Motor neuron (in vitro differentiated cells): ENCODE measurements at regions of chr9 and their contacts with region 1.

Region 1: DNA sequence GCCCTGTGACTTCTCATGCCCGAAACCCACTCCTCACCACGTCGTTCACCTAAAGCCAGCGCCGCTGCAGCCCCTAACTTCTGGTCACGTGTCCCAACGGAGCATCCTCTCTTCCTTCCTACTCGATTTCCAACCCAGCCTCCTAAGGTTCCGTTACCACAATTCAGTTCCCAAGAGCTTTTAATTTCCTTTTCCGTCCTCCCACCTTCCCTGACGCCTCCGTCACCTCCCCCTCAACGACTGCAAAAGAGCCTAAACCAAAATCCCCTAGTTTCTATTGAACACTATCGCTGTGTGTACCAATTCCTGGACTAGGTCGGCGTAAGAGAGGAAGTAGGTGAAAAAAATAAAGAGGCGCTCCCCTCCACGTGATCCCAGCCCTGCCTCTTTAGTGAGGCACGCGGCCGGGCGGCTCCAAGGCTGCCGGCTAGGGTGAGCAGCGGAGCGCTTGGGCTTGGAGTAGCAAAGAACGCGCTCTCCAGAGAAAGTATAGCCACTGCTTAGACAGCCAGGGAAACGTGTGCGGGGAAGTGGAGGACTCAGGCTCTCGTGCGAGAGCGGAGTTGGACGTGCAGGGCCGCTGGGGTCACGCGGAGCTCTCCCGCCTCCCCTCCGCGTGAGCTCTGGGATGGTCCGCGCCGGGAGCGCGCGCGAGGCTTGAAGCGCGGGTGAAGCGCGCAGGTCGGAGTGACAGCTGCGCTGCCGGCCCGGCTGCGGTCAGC is at the starts of genes CENPP and NOL8:
- ATAC-seq: peak; percentile 87 to 96 (median 95)
- H3K4me3 ChIP-seq: peak within 1 kb of the TSS; percentile 92 to 96 (median 94)
- H3K27ac ChIP-seq: peak within 1 kb of the TSS; percentile 98 to 100
- H3K4me1 ChIP-seq: peaks cover 6 to 7% of the 10 kb centered on the region in 2 donors
- total RNA-seq, gene CENPP: 1.7 to 22.3 (median 5.0) TPM
- total RNA-seq, gene NOL8: 17.2 to 77.0 (median 29.5) TPM

Region 2: GRCh38 chr9:92607773-92608172 is 282.3 kb after region 1 on chr9:
- in situ Hi-C with region 1: loop called in 1 of 9 experiments (anchors 25 kb)
- ATAC-seq: peak in 3 of 8 experiments; percentile 64 to 88 (median 77)
- H3K4me3 ChIP-seq: no peak overlapping the region
- H3K27ac ChIP-seq: peak overlapping the region in 1 of 2 donors; percentile 96
- H3K4me1 ChIP-seq: peaks cover 21% of the 10 kb centered on the region in 2 donors